PC-3 (cell line): ENCODE measurements at regions of chr17 and their contacts with region 1.

Region 1: DNA sequence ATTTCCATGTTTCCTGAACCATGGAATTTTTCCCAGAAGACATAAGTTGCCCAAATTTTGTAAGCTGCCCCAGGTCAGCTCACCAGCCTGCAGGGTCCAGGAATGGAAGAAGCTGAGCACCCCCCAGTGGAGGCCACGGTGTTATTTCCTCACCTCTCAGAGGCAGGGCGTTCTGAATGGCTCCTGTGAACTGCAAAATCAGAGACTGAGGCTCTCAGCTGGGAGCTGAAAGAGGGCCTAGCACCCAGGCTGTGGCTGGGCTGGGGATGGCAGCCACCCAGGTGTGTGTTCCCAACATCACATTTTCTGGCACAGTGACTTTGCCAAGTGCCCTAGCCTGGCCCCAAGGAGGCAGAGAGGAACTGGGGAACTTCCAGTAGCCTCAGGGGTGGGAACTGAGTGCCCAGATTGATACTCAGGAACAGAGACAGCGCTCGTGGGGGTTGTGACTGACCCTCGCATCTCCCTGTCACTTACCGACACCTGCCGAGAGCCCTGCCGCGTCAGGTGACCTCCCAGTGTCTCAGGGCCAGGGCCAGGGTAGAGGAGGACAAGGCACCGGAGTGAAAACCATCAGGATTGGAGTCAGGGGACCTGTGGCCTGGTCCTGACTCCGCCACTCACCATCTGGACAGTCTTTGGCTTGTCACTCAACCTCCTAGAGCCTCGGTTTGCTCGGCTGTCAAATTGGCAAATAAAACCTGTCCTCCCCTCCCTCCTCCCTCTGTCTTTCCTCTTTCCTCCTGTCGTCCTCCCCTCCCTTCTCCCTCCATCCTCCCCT is 11.3 kb downstream of the CACNG4 start:
- DNase-seq: peak; percentile 76
- ATAC-seq: peak; percentile 80
- H3K4me3 ChIP-seq: no peak overlapping the region
- H3K27ac ChIP-seq: no peak overlapping the region
- H3K4me1 ChIP-seq: peaks cover 10% of the 10 kb centered on the region
- H3K27me3 ChIP-seq: no peaks in the 10 kb centered on the region
- CTCF ChIP-seq: peak; percentile 84

Region 2: DNA sequence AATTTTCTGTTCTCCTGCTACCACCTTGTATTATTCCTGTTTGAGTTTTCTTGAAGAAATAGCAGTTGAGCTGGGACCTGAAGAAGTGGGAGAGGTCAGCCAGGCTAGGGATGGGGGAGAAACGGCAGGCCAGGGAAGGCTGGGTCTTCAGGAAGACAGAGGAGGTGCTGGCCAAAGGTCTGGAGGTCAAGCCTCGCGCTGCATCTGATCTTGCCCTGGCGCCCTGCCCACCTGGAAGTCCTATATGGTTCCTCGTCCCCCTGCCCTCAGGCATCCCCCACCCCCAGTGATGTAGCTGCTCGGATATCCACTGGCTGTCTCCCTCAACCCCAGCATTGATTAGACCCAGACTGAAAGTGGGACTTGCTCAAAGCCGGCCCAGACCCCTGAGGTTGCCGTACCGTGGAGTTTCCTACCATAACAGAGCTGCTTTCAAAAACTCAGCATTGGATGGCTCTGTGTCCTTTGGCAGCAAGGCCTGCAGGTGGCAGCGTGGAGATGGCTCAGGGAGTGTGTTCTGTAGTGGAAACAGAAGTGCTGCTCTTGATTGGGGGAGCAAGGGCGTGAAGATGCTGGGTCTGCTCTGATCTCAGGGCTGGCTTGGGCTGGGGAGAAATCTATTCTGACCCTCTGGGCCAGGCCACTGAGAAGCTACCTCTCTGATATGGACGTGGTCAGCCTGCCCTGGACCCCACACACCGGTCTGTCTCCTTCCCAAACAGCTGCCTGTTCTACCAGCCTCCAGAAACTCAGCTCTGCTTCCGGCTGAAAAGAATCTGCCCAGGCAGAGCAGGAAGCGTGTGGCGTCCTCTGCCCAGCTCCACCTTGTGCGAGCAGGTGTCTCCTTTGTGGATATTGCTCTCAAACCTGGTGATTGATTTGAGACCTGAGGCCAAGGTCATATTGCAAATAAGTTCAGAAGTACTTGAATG is 247.9 kb before region 1 on chr17:
- CTCF ChIA-PET with region 1: no interaction called
- POLR2A ChIA-PET with region 1: no interaction called
- intact Hi-C with region 1: loop called (anchors 1 kb)
- DNase-seq: peak; percentile 69
- ATAC-seq: peak; percentile 77
- H3K4me3 ChIP-seq: no peak overlapping the region
- H3K27ac ChIP-seq: no peak overlapping the region
- H3K4me1 ChIP-seq: peaks cover 9% of the 10 kb centered on the region
- H3K27me3 ChIP-seq: no peaks in the 10 kb centered on the region
- CTCF ChIP-seq: peak; percentile 90

Region 3: GRCh38 chr17:66915204-66916096 is 60.3 kb before region 1 on chr17:
- CTCF ChIA-PET with region 1: interaction called, 25 read pairs
- POLR2A ChIA-PET with region 1: no interaction called
- intact Hi-C with region 1: loop called (anchors 1 kb)
- DNase-seq: peak; percentile 86
- ATAC-seq: peak; percentile 99
- H3K4me3 ChIP-seq: no peak overlapping the region
- H3K27ac ChIP-seq: no peak overlapping the region
- H3K4me1 ChIP-seq: peaks cover 4% of the 10 kb centered on the region; the same call in 1 of the 2 replicates
- H3K27me3 ChIP-seq: no peaks in the 10 kb centered on the region
- CTCF ChIP-seq: peak; percentile 88

Region 4: DNA sequence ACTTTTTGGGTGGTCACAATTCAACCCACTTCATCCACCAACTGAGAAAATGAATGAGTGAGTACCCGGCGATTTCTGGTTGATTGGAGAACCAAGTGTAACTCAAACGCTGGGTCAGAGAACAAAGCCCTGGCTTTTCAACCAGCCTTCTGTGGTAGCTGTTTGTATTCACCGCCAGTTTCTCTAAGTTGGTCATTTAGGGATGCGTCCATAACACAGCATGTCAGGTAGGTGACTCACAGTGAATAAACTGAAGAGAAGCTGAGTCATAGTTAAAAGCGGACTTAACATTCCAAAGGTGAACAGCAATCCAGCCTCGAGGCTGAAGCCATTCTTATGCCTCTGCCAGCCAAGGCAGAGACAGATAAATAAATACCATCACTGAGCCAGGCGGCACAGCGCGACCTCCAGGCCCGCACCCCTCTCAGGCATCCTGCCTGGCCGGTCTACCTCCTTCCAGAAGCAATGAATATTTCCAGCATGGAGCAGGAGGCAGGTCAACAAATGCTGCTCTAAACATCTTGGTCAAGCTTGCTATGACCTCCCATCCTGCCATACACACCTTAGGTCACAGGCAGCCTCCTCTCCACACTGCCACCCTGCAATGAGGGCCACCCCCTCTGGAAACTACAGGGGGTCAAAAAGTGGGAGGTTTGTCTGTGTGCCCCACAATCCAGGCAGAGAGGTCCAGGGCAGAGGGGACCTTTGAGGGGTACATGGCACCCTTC is 23.7 kb before region 1 on chr17:
- CTCF ChIA-PET with region 1: interaction called, 4 read pairs
- POLR2A ChIA-PET with region 1: no interaction called
- intact Hi-C with region 1: loop called (anchors 1 kb)
- DNase-seq: peak; percentile 100
- ATAC-seq: peak; percentile 95
- H3K4me3 ChIP-seq: peak overlapping the region; percentile 46
- H3K27ac ChIP-seq: peak overlapping the region; percentile 94
- H3K4me1 ChIP-seq: peaks cover 44% of the 10 kb centered on the region
- H3K27me3 ChIP-seq: no peaks in the 10 kb centered on the region
- CTCF ChIP-seq: no peak

Region 5: DNA sequence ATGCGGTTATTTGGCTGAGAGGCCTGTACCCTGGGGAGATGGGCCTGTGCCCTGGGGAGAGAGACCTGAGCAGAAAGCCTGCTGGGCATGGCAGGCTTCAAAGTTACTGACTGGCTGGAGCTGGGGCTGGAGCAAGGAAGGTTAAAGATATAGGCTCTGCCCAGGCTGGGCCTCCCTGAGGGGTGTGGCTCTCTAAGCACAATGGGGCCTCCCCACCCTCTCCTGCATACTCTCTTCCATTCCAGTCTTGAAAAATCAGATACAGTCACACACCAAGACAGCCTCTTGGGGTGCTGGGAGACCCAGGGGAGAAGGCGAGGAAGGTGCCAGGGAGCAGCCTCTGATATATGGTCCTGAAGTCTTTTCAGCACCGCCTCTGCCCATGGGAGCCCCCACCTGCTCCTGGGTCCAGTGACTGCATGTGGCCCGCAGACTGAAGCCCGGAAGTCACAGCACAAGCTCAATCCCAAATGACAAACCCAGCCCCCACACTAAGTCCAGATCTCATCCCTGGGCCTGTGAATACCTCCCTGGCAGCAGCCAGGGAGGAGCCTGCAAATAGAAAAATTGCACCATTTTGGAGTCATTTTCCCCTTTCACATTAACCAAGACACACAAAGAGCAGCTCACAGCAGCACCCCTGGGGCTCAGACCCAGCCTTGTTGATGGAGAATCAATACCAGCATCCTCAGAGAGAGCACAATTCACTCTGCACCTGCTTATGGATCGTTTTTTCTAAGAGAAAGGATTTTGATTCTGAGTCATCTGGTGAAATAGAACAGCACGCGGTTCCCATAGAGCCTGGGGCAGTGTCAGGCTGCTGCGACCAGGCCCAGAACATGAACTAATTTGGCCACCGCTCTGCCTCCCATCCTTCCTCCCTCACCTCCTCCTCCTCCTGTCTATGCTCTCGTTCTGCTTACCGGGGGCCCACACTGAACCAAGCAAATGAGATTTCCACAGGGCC is 43.0 kb after region 1 on chr17:
- CTCF ChIA-PET with region 1: no interaction called
- POLR2A ChIA-PET with region 1: no interaction called
- intact Hi-C with region 1: no loop called
- DNase-seq: no peak
- ATAC-seq: peak; percentile 25; the same call in 1 of the 2 replicates
- H3K4me3 ChIP-seq: no peak overlapping the region
- H3K27ac ChIP-seq: no peak overlapping the region
- H3K4me1 ChIP-seq: no peaks in the 10 kb centered on the region
- H3K27me3 ChIP-seq: no peaks in the 10 kb centered on the region
- CTCF ChIP-seq: no peak